ENCODE measurements at regions of chr9 and their contacts with region 1.

Region 1: DNA sequence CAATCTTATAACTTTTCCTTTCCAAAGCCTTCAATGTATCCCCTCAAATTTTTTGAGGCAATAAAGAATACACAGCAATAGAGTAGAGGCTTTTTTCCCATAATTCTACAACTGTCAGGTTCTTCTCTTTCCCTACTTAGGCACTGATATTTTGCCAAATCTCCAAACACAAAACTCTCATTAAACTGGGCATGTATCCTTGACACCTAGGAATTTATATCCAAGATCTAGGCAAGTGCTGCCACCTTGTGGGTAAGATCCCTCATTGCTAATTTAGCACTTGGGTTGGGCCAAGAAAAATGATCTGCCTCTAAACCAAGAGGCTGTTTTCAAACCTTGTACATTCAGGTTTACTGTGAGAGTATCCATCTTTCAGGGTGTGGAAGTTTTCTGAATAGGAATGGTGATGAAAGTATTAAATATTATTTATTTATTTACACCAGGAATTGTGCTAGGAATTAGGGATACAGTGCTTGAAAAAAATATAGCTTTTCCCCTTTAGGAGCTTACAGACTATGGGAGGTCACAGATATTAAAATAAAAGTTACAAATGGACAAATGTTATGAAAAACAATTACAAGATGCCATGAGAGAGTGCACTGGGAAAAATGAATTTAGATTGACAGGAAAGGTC is 17.6 kb downstream of the TSTD2 start:
- DNase-seq: peak in 8 of 9 donors; percentile 29 to 61 (median 52)
- ATAC-seq: peak; percentile 76
- H3K4me3 ChIP-seq: no peak overlapping the region
- H3K4me3 Mint-ChIP-seq: no peak overlapping the region
- H3K27ac ChIP-seq: no peak overlapping the region
- H3K27ac Mint-ChIP-seq: peak overlapping the region in 1 of 9 donors; percentile 37
- H3K4me1 ChIP-seq: no peaks in the 10 kb centered on the region
- H3K4me1 Mint-ChIP-seq: peaks cover 0 to 15% (median 0%) of the 10 kb centered on the region in 7 donors
- H3K27me3 ChIP-seq: no peaks in the 10 kb centered on the region
- H3K27me3 Mint-ChIP-seq: no peaks in the 10 kb centered on the region

Region 2: GRCh38 chr9:97386733-97387503 is 228.6 kb before region 1 on chr9:
- CTCF ChIA-PET with region 1: interaction called, 3 read pairs
- POLR2A ChIA-PET with region 1: no interaction called
- intact Hi-C with region 1: loop called (anchors 1 kb)
- DNase-seq: peak; percentile 39 to 83 (median 52)
- ATAC-seq: peak; percentile 66
- H3K4me3 ChIP-seq: no peak overlapping the region
- H3K4me3 Mint-ChIP-seq: no peak overlapping the region
- H3K27ac ChIP-seq: no peak overlapping the region
- H3K27ac Mint-ChIP-seq: peak overlapping the region in 2 of 9 donors; percentile 38 to 49
- H3K4me1 ChIP-seq: no peaks in the 10 kb centered on the region
- H3K4me1 Mint-ChIP-seq: peaks cover 0 to 36% (median 5%) of the 10 kb centered on the region in 7 donors
- H3K27me3 ChIP-seq: no peaks in the 10 kb centered on the region
- H3K27me3 Mint-ChIP-seq: peaks cover 4 to 29% (median 13%) of the 10 kb centered on the region in 5 donors

Region 3: DNA sequence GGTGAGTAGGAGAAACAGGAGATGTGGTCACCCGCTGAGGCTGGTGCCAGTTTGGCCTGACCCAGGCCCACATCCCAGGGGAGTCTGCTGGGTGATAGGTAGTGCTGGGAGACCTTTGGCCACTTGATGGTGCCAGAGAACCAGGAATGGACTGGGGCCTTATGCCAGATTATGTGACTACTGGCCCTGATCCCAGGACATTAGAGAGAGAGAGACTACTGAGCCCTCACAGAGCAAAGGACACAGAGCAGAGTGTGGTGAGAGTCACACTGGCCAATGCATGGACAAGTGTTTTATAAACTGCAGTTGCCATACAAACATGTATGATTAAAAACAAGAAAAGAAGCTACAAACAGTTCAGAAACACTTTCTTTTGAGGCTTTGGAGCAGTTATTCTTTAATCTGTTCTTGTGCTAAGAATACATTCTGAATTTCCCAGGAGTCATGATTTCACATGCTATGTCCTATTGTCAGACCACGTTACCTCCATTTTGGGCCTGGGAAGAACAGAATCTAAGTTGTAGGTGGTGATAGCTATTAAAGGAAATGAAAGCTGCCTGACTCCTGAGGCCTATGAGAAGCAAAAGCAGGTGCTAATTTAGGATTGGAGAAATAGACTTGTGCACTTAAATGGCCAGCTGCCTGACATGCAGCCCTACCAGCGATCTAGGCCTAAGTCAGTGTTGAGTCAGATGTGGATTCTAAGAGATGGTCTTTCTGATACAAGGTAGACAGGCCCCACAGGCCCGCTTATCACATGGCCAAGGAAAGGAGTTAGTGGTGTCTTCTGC is 146.7 kb before region 1 on chr9:
- CTCF ChIA-PET with region 1: interaction called, 16 read pairs
- POLR2A ChIA-PET with region 1: no interaction called
- intact Hi-C with region 1: loop called (anchors 1 kb)
- DNase-seq: peak in 7 of 9 donors; percentile 5 to 44 (median 20)
- ATAC-seq: peak; percentile 54
- H3K4me3 ChIP-seq: no peak overlapping the region
- H3K4me3 Mint-ChIP-seq: no peak overlapping the region
- H3K27ac ChIP-seq: no peak overlapping the region
- H3K27ac Mint-ChIP-seq: peak overlapping the region in 1 of 9 donors; percentile 32
- H3K4me1 ChIP-seq: no peaks in the 10 kb centered on the region
- H3K4me1 Mint-ChIP-seq: peaks cover 0 to 5% (median 0%) of the 10 kb centered on the region in 7 donors
- H3K27me3 ChIP-seq: no peaks in the 10 kb centered on the region
- H3K27me3 Mint-ChIP-seq: no peaks in the 10 kb centered on the region

Region 4: DNA sequence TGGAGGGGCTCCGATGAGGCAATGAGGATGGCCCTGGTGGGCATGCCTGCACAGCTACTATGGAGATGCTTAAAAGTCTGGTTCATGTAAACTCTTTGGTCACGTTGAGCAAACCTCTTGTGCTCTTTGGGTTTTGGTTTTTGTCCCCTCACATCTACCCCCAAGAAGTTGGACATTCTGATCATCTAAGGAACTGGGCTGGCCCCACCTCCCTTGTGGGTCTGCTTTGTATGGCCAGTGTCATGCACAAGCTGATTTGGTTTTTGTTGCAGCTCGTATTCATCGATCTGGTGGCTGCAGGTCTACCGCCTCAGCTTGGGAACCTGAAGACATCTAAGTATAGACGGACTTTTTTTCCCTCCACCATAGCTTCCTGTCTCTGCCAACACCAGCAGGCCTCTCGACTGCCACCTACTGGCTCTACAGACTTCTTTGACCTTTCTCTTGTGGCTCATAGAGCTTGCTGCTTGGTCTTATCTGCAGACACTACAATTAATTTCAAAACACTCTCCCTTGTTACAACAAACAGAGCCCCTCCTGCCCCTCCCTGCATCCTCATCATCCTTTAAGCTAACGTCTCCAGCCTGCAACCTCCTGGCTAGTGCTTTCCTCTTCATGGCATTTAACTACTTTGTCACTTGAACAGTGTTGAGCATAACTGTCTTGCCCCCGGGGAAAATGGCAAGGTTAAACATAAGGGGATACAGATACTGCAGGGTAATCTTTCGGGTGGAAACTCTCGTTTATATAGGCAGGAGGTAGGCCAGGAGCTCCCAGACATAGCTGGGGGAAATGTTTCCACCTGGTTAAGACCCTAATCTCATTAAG is 16.9 kb before region 1 on chr9:
- CTCF ChIA-PET with region 1: interaction called, 23 read pairs
- POLR2A ChIA-PET with region 1: no interaction called
- intact Hi-C with region 1: no loop called
- DNase-seq: peak; percentile 26 to 73 (median 67)
- ATAC-seq: peak; percentile 93
- H3K4me3 ChIP-seq: no peak overlapping the region
- H3K4me3 Mint-ChIP-seq: peak overlapping the region in 9 of 10 donors; percentile 19 to 73 (median 60)
- H3K27ac ChIP-seq: no peak overlapping the region
- H3K27ac Mint-ChIP-seq: peak overlapping the region in 4 of 9 donors; percentile 4 to 49 (median 20)
- H3K4me1 ChIP-seq: peaks cover 4% of the 10 kb centered on the region in 2 donors
- H3K4me1 Mint-ChIP-seq: peaks cover 6 to 8% (median 6%) of the 10 kb centered on the region in 7 donors
- H3K27me3 ChIP-seq: no peaks in the 10 kb centered on the region
- H3K27me3 Mint-ChIP-seq: peaks cover 0 to 2% (median 0%) of the 10 kb centered on the region in 5 donors

Region 5: GRCh38 chr9:97873877-97874276 is 258.3 kb after region 1 on chr9:
- CTCF ChIA-PET with region 1: no interaction called
- POLR2A ChIA-PET with region 1: no interaction called
- intact Hi-C with region 1: no loop called
- DNase-seq: no peak
- ATAC-seq: no peak
- H3K4me3 ChIP-seq: no peak overlapping the region
- H3K4me3 Mint-ChIP-seq: no peak overlapping the region
- H3K27ac ChIP-seq: no peak overlapping the region
- H3K27ac Mint-ChIP-seq: no peak overlapping the region
- H3K4me1 ChIP-seq: no peaks in the 10 kb centered on the region
- H3K4me1 Mint-ChIP-seq: peaks cover 0 to 5% (median 0%) of the 10 kb centered on the region in 7 donors
- H3K27me3 ChIP-seq: no peaks in the 10 kb centered on the region
- H3K27me3 Mint-ChIP-seq: peaks cover 4 to 28% (median 10%) of the 10 kb centered on the region in 5 donors

Measured in naive thymus-derived CD4-positive, alpha-beta T cell (primary cell).